ENCODE measurements at regions of chr4 and their contacts with region 1.

Region 1: DNA sequence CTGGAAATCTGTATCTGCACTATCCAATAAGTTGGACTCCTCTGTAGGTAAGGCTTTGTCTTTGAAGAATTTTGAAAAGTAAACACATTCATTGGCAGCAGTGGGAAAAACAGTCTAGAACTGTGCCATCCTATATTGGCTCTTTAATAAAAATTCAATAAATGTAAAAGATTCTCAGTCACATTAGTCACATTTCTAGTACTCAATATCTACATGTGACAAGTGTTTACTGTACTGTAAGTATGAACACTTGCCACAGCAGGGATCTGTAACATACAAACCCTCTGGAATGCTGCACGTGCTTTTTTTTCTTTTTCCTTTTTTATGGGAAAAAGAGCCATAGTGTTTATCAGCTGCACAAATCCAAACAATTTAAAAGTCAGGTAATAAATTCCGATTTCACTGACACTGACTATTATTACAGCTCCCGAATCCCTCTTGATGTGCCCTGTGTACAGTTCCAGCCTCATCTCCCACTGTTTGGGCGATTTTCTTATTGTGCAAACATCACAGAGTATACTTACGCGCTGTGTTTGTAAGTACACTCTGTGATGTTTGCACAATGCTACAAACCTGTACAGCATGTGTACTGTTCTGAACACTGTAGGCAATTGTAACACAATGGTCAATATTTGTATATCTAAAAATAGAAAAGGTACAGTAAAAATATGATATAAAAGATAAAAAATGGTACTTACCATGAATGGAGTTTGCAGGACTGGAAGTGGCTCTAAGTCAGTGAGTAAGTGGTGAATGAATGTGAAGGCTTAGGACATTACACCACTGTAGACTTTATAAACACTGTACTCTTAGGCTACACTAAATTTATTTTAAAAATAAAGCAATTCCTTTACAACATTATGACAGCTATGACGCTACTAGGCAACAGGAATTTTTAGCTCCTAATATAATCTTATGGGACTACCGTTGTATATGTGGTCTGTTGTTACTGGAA is 8.7 kb downstream of the PYURF start:
- DNase-seq: no peak
- ATAC-seq: no peak
- H3K4me3 ChIP-seq: no peak overlapping the region
- H3K4me3 Mint-ChIP-seq: no peak overlapping the region
- H3K27ac ChIP-seq: no peak overlapping the region
- H3K27ac Mint-ChIP-seq: no peak overlapping the region
- H3K4me1 ChIP-seq: no peaks in the 10 kb centered on the region
- H3K4me1 Mint-ChIP-seq: no peaks in the 10 kb centered on the region
- H3K27me3 ChIP-seq: no peaks in the 10 kb centered on the region
- H3K27me3 Mint-ChIP-seq: peaks cover 0 to 4% of the 10 kb centered on the region in 2 donors
- CTCF ChIP-seq: no peak

Region 2: GRCh38 chr4:88033309-88033708 is 481.5 kb before region 1 on chr4:
- intact Hi-C with region 1: loop called (anchors 2 kb)
- DNase-seq: peak in 1 of 2 donors; percentile 74
- ATAC-seq: peak; percentile 61 to 71 (median 67)
- H3K4me3 ChIP-seq: no peak overlapping the region
- H3K4me3 Mint-ChIP-seq: no peak overlapping the region
- H3K27ac ChIP-seq: no peak overlapping the region
- H3K27ac Mint-ChIP-seq: no peak overlapping the region
- H3K4me1 ChIP-seq: no peaks in the 10 kb centered on the region
- H3K4me1 Mint-ChIP-seq: peaks cover 0 to 12% of the 10 kb centered on the region in 2 donors
- H3K27me3 ChIP-seq: no peaks in the 10 kb centered on the region
- H3K27me3 Mint-ChIP-seq: no peaks in the 10 kb centered on the region
- CTCF ChIP-seq: peak; percentile 63

Region 3: DNA sequence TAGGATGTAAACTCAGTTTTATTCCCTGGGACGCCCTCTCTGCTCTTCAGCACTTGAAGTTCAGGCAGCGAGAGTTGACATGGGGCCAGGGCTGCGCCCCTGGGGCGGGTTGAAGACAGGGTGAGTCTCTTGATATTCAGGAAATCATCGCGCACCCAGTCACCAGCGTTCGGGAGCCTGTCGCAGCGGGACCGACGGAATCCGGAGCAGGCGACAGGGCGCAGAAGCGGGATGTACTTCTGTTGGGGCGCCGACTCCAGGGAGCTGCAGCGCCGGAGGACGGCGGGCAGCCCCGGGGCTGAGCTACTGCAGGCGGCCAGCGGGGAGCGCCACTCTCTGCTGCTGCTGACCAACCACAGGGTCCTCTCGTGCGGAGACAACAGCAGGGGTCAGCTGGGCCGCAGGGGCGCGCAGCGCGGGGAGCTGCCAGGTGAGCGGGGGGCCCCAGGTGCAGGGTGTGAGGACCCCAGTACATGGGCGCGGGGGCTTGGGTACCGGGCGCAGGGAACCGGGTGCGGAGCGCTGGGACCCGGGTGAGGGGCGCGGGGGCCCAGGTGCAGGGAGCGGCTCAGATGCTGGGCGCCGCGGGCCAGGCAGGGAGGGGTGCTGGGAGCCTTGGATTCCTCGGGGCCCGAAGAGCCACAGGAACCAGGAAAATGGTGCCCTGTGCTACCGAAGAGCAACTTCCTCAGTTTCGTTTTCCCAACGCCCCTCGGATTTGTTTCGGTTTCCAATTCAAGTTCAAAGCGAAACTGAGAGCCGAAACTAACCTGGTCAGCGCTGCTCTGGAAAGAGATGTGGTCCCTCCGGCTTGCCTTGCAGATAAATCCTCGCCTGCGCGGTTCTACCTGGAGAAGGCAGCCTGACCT is 135.9 kb before region 1 on chr4 and contains the start of gene HERC6:
- intact Hi-C with region 1: loop called (anchors 10 kb)
- DNase-seq: peak; percentile 64 to 92
- ATAC-seq: peak; percentile 81 to 88 (median 83)
- H3K4me3 ChIP-seq: peak within 1 kb of the TSS; percentile 87
- H3K4me3 Mint-ChIP-seq: peak within 1 kb of the TSS; percentile 96
- H3K27ac ChIP-seq: peak within 1 kb of the TSS; percentile 89
- H3K27ac Mint-ChIP-seq: peak within 1 kb of the TSS; percentile 92 to 97
- H3K4me1 ChIP-seq: peaks cover 8% of the 10 kb centered on the region
- H3K4me1 Mint-ChIP-seq: peaks cover 16 to 21% of the 10 kb centered on the region in 2 donors
- H3K27me3 ChIP-seq: no peaks in the 10 kb centered on the region
- H3K27me3 Mint-ChIP-seq: no peaks in the 10 kb centered on the region
- CTCF ChIP-seq: peak; percentile 76
- total RNA-seq, gene HERC6: 8.3 to 18.0 (median 17.5) TPM